Uterus (tissue), 4 donors: ENCODE measurements at regions of chr9 and their contacts with region 1.

Region 1: GRCh38 chr9:11158063-11158462 is 545.3 kb upstream of the PTPRD start:
- DNase-seq: no peak
- H3K4me3 ChIP-seq: no peak overlapping the region
- H3K27ac ChIP-seq: no peak overlapping the region
- H3K4me1 ChIP-seq: no peaks in the 10 kb centered on the region
- H3K27me3 ChIP-seq: no peaks in the 10 kb centered on the region
- CTCF ChIP-seq: no peak
- POLR2A ChIP-seq: no peak

Region 2: GRCh38 chr9:10268531-10269485 is 889.3 kb before region 1 on chr9:
- intact Hi-C with region 1: no loop called
- DNase-seq: no peak
- H3K4me3 ChIP-seq: no peak overlapping the region
- H3K27ac ChIP-seq: no peak overlapping the region
- H3K4me1 ChIP-seq: no peaks in the 10 kb centered on the region
- H3K27me3 ChIP-seq: no peaks in the 10 kb centered on the region
- CTCF ChIP-seq: no peak
- POLR2A ChIP-seq: no peak

Region 3: DNA sequence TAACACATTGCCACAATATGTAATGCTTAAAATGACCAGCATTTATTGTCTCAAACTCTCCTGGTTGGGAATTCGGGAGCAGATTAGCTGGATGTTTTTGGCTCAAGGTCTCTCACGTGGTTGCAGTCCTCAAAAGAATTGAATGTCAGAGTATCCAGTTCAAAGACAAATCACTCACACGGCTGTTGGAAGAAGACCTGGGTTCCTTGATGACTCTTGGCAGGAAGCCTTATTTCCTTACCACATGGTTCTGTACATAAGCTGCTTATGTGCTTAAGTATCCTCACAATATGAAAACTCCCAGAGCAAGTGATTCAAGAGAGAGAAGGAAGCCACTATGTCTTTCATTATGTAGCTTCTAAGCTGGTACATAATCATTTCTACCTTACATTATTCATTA is 314.9 kb before region 1 on chr9:
- intact Hi-C with region 1: no loop called
- DNase-seq: no peak
- H3K4me3 ChIP-seq: no peak overlapping the region
- H3K27ac ChIP-seq: no peak overlapping the region
- H3K4me1 ChIP-seq: no peaks in the 10 kb centered on the region
- H3K27me3 ChIP-seq: no peaks in the 10 kb centered on the region
- CTCF ChIP-seq: no peak
- POLR2A ChIP-seq: no peak

Region 4: DNA sequence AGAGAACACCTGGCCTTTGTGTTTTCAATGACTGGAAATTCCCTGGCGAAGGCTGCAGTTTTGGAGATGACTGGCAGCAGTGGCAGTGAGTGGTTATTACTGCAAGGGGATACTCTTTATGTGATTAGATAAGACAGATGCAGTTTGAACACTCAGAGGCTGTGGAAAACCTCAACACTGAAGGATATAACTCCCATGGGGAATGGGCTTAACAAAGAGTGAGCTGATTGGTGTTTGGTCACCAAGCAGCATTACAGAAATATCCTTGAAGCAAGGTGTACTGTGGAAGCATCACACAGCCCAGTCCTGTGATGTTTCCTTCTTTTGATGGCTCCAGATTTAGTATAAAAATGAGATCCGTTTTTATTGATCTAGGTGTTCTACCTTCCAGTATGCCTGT is 54.5 kb before region 1 on chr9:
- intact Hi-C with region 1: no loop called
- DNase-seq: no peak
- H3K4me3 ChIP-seq: no peak overlapping the region
- H3K27ac ChIP-seq: no peak overlapping the region
- H3K4me1 ChIP-seq: no peaks in the 10 kb centered on the region
- H3K27me3 ChIP-seq: no peaks in the 10 kb centered on the region
- CTCF ChIP-seq: no peak
- POLR2A ChIP-seq: no peak

Region 5: GRCh38 chr9:11204521-11204920 is 46.5 kb after region 1 on chr9:
- intact Hi-C with region 1: loop called (anchors 10 kb)
- DNase-seq: no peak
- H3K4me3 ChIP-seq: no peak overlapping the region
- H3K27ac ChIP-seq: no peak overlapping the region
- H3K4me1 ChIP-seq: no peaks in the 10 kb centered on the region
- H3K27me3 ChIP-seq: no peaks in the 10 kb centered on the region
- CTCF ChIP-seq: no peak
- POLR2A ChIP-seq: no peak

Region 6: GRCh38 chr9:11414241-11414640 is 256.2 kb after region 1 on chr9:
- intact Hi-C with region 1: no loop called
- DNase-seq: no peak
- H3K4me3 ChIP-seq: no peak overlapping the region
- H3K27ac ChIP-seq: no peak overlapping the region
- H3K4me1 ChIP-seq: no peaks in the 10 kb centered on the region
- H3K27me3 ChIP-seq: no peaks in the 10 kb centered on the region
- CTCF ChIP-seq: no peak
- POLR2A ChIP-seq: no peak